Ovary (tissue), 10 donors: ENCODE measurements at regions of chr14 and their contacts with region 1.

Region 1: GRCh38 chr14:21408147-21408546 is 24.3 kb upstream of the SUPT16H start:
- DNase-seq: no peak
- H3K4me3 ChIP-seq: no peak overlapping the region
- H3K27ac ChIP-seq: no peak overlapping the region
- H3K4me1 ChIP-seq: no peaks in the 10 kb centered on the region
- H3K27me3 ChIP-seq: no peaks in the 10 kb centered on the region
- CTCF ChIP-seq: no peak
- EP300 ChIP-seq: no peak
- POLR2A ChIP-seq: no peak

Region 2: DNA sequence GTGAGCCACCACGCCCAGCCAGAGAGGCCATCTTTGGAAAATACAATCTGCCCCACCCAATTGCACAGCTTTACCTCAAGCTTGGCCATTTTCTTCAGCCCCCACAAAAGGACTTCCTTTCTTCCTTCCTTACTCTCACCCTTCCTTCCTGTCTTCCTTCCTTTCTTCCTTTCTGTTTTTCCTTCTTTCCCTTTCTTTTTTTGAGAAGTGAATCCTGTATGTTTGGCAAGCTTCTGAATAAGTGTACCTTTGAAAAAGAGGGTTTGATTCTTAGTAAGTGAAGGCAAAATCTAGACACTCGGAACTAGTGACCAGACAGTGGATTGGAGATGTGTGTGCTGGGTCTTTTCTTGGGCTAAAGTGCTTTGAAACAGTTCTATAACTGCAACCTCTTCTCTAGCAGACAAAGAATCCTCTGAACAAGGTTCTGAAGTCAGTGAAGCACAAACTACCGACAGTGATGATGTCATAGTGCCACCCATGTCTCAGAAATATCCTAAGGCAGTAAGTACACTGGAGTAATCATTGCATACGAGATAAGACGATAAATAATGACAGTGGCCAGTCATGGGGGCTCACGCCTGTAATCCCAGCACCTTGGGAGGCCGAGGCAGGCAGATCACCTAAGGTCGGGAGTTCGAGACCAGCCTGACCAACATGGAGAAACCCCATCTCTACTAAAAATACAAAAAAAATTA is 73.8 kb before region 1 on chr14:
- intact Hi-C with region 1: no loop called
- DNase-seq: no peak
- H3K4me3 ChIP-seq: no peak overlapping the region
- H3K27ac ChIP-seq: no peak overlapping the region
- H3K4me1 ChIP-seq: no peaks in the 10 kb centered on the region
- H3K27me3 ChIP-seq: no peaks in the 10 kb centered on the region
- CTCF ChIP-seq: no peak
- EP300 ChIP-seq: no peak
- POLR2A ChIP-seq: no peak

Region 3: GRCh38 chr14:21367582-21368144 is 40.5 kb before region 1 on chr14:
- intact Hi-C with region 1: loop called in 1 of 4 experiments (anchors 5 kb)
- DNase-seq: no peak
- H3K4me3 ChIP-seq: no peak overlapping the region
- H3K27ac ChIP-seq: no peak overlapping the region
- H3K4me1 ChIP-seq: no peaks in the 10 kb centered on the region
- H3K27me3 ChIP-seq: no peaks in the 10 kb centered on the region
- CTCF ChIP-seq: no peak
- EP300 ChIP-seq: no peak
- POLR2A ChIP-seq: no peak

Region 4: GRCh38 chr14:21428930-21429329 is 20.8 kb after region 1 on chr14:
- intact Hi-C with region 1: no loop called
- DNase-seq: no peak
- H3K4me3 ChIP-seq: no peak overlapping the region
- H3K27ac ChIP-seq: no peak overlapping the region
- H3K4me1 ChIP-seq: no peaks in the 10 kb centered on the region
- H3K27me3 ChIP-seq: no peaks in the 10 kb centered on the region
- CTCF ChIP-seq: no peak
- EP300 ChIP-seq: no peak
- POLR2A ChIP-seq: no peak